Endothelial cell of umbilical vein (primary cell): ENCODE measurements at regions of chr5 and their contacts with region 1.

Region 1: DNA sequence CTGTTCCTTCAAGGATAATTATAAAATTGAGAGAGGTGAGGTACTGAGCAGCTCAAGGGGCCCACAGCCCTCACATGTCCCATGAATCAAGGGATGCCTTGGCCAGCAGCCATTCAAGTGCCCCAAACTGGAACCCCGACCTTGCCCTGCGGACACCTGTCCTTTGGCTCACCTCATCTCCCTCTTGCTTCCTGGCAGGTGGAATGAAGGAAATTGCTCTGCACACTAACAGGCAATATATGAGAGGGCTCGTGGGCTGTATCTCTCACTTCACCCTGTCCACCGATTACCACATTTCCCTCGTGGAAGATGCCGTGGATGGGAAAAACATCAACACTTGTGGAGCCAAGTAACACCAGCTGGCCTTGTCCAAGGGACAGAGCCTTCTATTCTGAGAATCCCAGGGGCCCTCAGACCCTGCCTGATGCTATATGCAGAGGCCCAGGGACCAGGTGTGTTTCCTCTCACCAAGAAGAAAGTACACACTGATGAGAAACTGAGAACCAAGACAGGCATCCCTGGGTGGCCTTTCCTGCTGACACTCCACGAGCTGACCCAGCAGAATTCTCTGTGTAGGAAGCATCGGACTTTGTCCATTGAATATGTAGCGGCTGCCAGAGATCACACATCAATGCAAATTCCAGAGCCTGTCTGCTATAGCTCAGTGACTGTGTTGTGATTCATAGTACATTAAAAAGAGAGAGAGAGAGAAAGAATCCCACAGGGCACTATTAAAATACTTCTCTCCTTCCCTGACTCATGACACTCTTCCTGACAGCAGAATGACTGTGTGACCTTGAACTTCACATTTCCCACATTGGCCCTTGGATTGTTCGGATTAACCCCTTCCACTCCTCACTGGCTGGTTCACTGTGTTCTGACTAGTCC is 92.6 kb downstream of the LIFR start:
- DNase-seq: peak; percentile 89
- H3K4me3 ChIP-seq: no peak overlapping the region
- H3K27ac ChIP-seq: peak overlapping the region; percentile 90
- H3K4me1 ChIP-seq: peaks cover 64% of the 10 kb centered on the region
- H3K27me3 ChIP-seq: no peaks in the 10 kb centered on the region
- CTCF ChIP-seq: no peak
- POLR2A ChIP-seq: peak; percentile 73

Region 2: DNA sequence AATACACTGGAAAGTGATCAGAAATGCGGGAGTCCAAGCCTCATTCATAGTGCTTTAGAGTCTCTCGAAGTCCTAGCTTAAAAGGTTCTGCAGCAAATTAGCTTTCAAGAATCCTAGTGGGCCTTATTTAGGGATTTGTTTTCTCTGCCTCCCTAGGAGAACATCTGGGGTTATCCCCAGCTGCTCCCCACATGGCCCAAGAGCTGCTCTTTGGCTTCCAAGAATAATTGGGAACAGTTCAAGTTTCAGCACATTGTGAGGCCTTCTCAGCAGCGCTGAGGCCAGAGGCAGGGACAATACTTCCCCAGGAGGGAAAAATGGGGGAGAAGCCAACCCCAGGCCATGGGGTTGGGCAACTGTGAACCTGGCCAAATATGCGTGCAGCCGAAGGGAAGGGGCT is 16.1 kb before region 1 on chr5:
- CTCF ChIA-PET with region 1: interaction called, 163 read pairs
- POLR2A ChIA-PET with region 1: no interaction called
- dilution Hi-C with region 1: no loop called
- intact Hi-C with region 1: no loop called
- DNase-seq: no peak
- H3K4me3 ChIP-seq: no peak overlapping the region
- H3K27ac ChIP-seq: no peak overlapping the region
- H3K4me1 ChIP-seq: no peaks in the 10 kb centered on the region
- H3K27me3 ChIP-seq: no peaks in the 10 kb centered on the region
- CTCF ChIP-seq: no peak
- POLR2A ChIP-seq: no peak

Region 3: GRCh38 chr5:38598994-38599611 is 135.2 kb after region 1 on chr5:
- CTCF ChIA-PET with region 1: interaction called, 3 read pairs
- POLR2A ChIA-PET with region 1: interaction called, 3 read pairs
- dilution Hi-C with region 1: no loop called
- intact Hi-C with region 1: loop called (anchors 2 kb)
- DNase-seq: peak; percentile 87
- H3K4me3 ChIP-seq: no peak overlapping the region
- H3K27ac ChIP-seq: peak overlapping the region; percentile 66
- H3K4me1 ChIP-seq: peaks cover 59% of the 10 kb centered on the region
- H3K27me3 ChIP-seq: no peaks in the 10 kb centered on the region
- CTCF ChIP-seq: no peak
- POLR2A ChIP-seq: no peak